ENCODE measurements at regions of chr6 and their contacts with region 1.

Region 1: GRCh38 chr6:28355743-28356665 is 6.3 kb downstream of the ZKSCAN3 start:
- H3K4me3 ChIP-seq: peak overlapping the region; percentile 63
- H3K27ac ChIP-seq: peak overlapping the region; percentile 4; the same call in 1 of the 2 replicates
- H3K4me1 ChIP-seq: peaks cover 3% of the 10 kb centered on the region; the same call in 1 of the 2 replicates
- CTCF ChIP-seq: peak; percentile 50; the same call in 1 of the 2 replicates

Region 2: DNA sequence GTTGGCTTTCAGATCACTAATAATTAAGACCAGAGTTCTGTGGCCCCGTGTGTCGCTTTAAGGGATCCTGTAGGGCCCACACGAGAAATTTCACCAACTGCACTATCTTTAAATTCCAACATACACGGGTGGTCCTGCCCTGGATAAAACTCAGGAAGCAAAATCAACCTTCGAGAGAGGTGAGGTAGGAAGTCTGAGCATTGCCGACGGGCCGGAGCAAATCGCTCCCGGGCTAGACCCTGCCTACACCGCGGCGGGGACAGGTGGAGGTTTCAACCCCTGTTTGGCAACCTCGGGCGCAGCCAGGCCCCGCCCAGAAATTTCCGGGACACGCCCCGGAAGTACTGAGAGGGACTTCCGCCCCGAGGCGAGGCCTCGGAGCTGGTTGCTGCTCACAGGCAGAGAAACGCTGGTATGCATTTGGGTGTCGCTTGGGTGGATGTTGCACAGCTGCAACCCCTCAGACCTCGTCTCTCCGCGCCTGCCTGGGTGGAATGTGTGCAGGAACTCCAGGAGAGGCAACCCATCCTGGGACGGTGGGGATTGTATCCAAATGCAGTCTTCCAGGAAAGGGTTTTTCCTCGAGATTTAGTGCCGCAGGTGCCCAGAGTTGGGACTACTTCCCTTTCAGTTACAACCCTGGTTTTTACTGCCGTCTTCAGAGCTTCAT is 194.5 kb before region 1 on chr6:
- CTCF ChIA-PET with region 1: no interaction called
- POLR2A ChIA-PET with region 1: interaction called, 13 read pairs
- H3K4me3 ChIP-seq: peak overlapping the region; percentile 50
- H3K27ac ChIP-seq: peak overlapping the region; percentile 63
- H3K4me1 ChIP-seq: peaks cover 3% of the 10 kb centered on the region; the same call in 1 of the 2 replicates
- CTCF ChIP-seq: no peak; the same call in 1 of the 2 replicates

Region 3: GRCh38 chr6:28252009-28252975 is 103.7 kb before region 1 on chr6 and contains the start of gene ZKSCAN4:
- CTCF ChIA-PET with region 1: interaction called, 13 read pairs
- POLR2A ChIA-PET with region 1: interaction called, 12 read pairs
- H3K4me3 ChIP-seq: peak within 1 kb of the TSS; percentile 74
- H3K27ac ChIP-seq: peak within 1 kb of the TSS; percentile 20; the same call in 1 of the 2 replicates
- H3K4me1 ChIP-seq: peaks cover 5% of the 10 kb centered on the region; the same call in 1 of the 2 replicates
- CTCF ChIP-seq: no peak

Region 4: DNA sequence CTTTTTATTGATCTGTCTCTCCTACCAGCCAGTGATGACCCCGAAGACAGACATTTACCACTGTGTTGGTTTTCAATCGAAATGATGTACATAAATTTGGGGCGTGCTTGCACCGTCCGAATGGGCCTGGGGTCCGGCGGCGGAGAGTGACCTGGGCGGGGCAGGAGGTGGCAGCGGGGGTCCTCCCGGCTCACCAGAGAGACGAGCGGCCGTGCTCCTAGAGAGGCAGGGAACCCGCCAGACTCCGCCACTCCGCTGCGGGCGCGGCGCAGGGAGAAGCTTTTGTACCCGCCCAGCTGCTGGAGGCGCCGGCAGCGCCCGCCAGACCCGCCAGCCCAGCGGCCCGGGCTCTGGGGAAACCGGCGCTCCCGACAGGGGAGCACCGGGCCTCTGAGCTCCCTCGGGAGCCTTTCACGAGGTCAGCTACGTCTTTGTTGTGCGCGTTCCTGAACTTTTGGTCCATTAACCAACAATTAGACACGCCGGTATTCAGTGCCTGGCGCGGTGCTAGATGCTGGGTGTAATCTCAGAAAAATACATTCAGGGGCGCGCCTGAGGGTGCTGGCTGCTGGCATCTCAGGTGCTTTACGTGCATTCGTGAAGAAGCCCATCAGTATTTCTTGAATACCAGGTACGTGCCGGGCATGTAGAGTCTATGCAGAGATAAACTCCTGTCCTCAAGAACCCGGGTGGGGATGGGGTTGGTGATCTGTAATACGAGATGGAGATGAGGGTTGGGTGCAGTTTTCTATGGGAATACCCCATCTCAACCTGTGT is 74.5 kb before region 1 on chr6 and contains the start of gene PGBD1:
- CTCF ChIA-PET with region 1: interaction called, 9 read pairs
- POLR2A ChIA-PET with region 1: interaction called, 12 read pairs
- H3K4me3 ChIP-seq: peak within 1 kb of the TSS; percentile 89
- H3K27ac ChIP-seq: peak within 1 kb of the TSS; percentile 65; the same call in 1 of the 2 replicates
- H3K4me1 ChIP-seq: no peaks in the 10 kb centered on the region
- CTCF ChIP-seq: 0 out of 2 replicates have a peak, but pooled peaks have one; percentile 25

Region 5: GRCh38 chr6:28335564-28336283 is 20.3 kb before region 1 on chr6 and contains the start of gene ZSCAN31:
- CTCF ChIA-PET with region 1: interaction called, 7 read pairs
- POLR2A ChIA-PET with region 1: interaction called, 34 read pairs
- H3K4me3 ChIP-seq: peak within 1 kb of the TSS; percentile 78
- H3K27ac ChIP-seq: peak within 1 kb of the TSS; percentile 88
- H3K4me1 ChIP-seq: peaks cover 4% of the 10 kb centered on the region; the same call in 1 of the 2 replicates
- CTCF ChIP-seq: no peak

Region 6: GRCh38 chr6:28371706-28372451 is 15.9 kb after region 1 on chr6:
- CTCF ChIA-PET with region 1: interaction called, 12 read pairs
- POLR2A ChIA-PET with region 1: interaction called, 4 read pairs
- H3K4me3 ChIP-seq: no peak overlapping the region
- H3K27ac ChIP-seq: no peak overlapping the region
- H3K4me1 ChIP-seq: no peaks in the 10 kb centered on the region
- CTCF ChIP-seq: no peak

Region 7: DNA sequence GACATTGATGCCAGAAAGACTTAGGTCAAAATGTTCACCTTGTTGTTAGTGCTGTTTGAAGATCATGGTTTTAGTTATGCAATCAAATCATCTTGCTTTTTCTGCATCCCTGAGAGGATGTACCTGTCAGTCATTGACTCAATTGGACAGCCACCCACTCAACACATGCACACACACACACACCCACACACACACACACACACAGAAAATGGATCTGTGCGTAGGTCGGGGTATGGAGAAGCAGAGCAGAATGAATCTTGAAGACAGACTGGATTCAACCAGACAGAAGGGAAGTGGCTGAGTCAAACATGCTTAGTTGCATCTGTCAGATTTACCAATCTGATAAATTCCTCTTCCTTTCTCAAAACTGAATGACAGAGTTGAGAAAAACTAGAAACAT is 106.4 kb after region 1 on chr6:
- CTCF ChIA-PET with region 1: no interaction called
- POLR2A ChIA-PET with region 1: no interaction called
- H3K4me3 ChIP-seq: no peak overlapping the region
- H3K27ac ChIP-seq: no peak overlapping the region
- H3K4me1 ChIP-seq: no peaks in the 10 kb centered on the region
- CTCF ChIP-seq: no peak